ENCODE measurements at regions of chr13 and their contacts with region 1.

Region 1: DNA sequence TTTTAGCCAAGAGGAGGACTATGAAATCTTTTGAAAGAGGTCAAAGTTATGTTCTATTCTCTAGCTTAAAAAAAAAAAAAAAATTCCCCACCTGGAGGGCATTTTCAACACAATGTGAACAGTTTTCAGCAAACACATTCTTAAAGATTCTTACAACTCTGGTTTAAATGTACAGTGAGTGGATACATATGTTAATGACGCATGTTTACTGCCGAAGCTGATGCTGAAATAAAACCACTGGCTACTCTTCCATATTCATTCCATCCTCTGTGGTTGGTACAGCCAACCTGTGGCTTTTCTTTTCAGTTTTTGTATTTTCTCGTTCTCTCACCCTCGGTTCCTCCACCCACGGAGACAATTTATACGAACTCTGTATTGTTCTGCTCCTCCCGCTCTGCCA is 466.3 kb upstream of the ARGLU1 start:
- DNase-seq: peak; percentile 52
- ATAC-seq: no peak
- H3K4me3 ChIP-seq: no peak overlapping the region
- H3K27ac ChIP-seq: peak overlapping the region; percentile 56; the same call in 1 of the 2 replicates
- H3K4me1 ChIP-seq: peaks cover 15% of the 10 kb centered on the region
- H3K27me3 ChIP-seq: no peaks in the 10 kb centered on the region
- CTCF ChIP-seq: no peak
- POLR2A ChIP-seq: no peak
- RAD21 ChIP-seq: no peak

Region 2: GRCh38 chr13:106989876-106990275 is 44.4 kb before region 1 on chr13:
- CTCF ChIA-PET with region 1: no interaction called
- POLR2A ChIA-PET with region 1: no interaction called
- dilution Hi-C with region 1: no loop called
- in situ Hi-C with region 1: no loop called
- intact Hi-C with region 1: loop called (anchors 5 kb)
- DNase-seq: no peak
- ATAC-seq: no peak
- H3K4me3 ChIP-seq: no peak overlapping the region
- H3K27ac ChIP-seq: no peak overlapping the region
- H3K4me1 ChIP-seq: peaks cover 5% of the 10 kb centered on the region; the same call in 1 of the 2 replicates
- H3K27me3 ChIP-seq: no peaks in the 10 kb centered on the region
- CTCF ChIP-seq: no peak
- POLR2A ChIP-seq: no peak
- RAD21 ChIP-seq: no peak

Region 3: DNA sequence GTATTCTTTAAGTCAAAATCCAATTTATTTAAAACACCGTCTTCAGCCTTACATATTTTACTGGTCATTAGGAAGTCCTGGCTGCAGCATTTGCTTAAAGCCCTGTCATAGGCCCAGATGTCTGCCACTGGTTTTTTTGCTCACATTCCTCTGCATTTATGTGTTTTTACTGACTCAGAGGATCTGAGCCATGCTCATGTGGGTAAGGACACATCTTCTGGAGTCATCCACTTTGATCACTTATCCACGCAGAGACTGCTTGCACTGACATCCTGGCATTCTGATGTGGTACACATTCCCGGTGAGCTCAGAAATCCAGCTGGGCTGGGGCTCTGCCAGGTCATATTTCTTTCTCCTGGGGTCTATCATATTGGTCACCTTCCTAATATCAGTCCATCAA is 65.4 kb after region 1 on chr13:
- CTCF ChIA-PET with region 1: no interaction called
- POLR2A ChIA-PET with region 1: no interaction called
- dilution Hi-C with region 1: no loop called
- in situ Hi-C with region 1: no loop called
- intact Hi-C with region 1: loop called (anchors 5 kb)
- DNase-seq: peak; percentile 93
- ATAC-seq: peak; percentile 97
- H3K4me3 ChIP-seq: no peak overlapping the region
- H3K27ac ChIP-seq: no peak overlapping the region
- H3K4me1 ChIP-seq: peaks cover 3% of the 10 kb centered on the region; the same call in 1 of the 2 replicates
- H3K27me3 ChIP-seq: no peaks in the 10 kb centered on the region
- CTCF ChIP-seq: no peak
- POLR2A ChIP-seq: no peak
- RAD21 ChIP-seq: no peak

Region 4: DNA sequence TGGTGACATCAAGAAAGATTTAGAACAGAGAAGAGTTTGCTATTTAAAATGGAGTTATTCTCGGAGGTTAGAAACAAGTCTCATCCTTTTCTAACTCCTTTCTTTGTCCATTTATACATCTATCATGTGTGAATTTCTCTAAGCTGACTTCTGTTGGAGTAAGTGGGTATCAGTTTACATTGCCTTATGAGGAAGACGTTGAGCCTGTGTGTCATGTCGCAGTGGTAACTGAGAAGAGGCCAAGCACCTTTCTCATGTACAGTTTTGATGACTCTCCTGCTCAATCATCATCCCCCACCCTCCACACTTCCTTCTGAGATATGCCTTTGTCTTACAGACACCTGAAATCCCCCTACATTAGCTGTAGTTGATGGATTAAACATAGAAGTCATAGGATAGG is 556.3 kb after region 1 on chr13:
- CTCF ChIA-PET with region 1: no interaction called
- POLR2A ChIA-PET with region 1: no interaction called
- dilution Hi-C with region 1: no loop called
- in situ Hi-C with region 1: no loop called
- intact Hi-C with region 1: no loop called
- DNase-seq: peak; percentile 83
- ATAC-seq: peak; percentile 43
- H3K4me3 ChIP-seq: no peak overlapping the region
- H3K27ac ChIP-seq: no peak overlapping the region
- H3K4me1 ChIP-seq: peaks cover 3% of the 10 kb centered on the region; the same call in 1 of the 2 replicates
- H3K27me3 ChIP-seq: no peaks in the 10 kb centered on the region
- CTCF ChIP-seq: no peak
- POLR2A ChIP-seq: no peak
- RAD21 ChIP-seq: no peak